Mammary epithelial cell (primary cell): ENCODE measurements at regions of chr5 and their contacts with region 1.

Region 1: DNA sequence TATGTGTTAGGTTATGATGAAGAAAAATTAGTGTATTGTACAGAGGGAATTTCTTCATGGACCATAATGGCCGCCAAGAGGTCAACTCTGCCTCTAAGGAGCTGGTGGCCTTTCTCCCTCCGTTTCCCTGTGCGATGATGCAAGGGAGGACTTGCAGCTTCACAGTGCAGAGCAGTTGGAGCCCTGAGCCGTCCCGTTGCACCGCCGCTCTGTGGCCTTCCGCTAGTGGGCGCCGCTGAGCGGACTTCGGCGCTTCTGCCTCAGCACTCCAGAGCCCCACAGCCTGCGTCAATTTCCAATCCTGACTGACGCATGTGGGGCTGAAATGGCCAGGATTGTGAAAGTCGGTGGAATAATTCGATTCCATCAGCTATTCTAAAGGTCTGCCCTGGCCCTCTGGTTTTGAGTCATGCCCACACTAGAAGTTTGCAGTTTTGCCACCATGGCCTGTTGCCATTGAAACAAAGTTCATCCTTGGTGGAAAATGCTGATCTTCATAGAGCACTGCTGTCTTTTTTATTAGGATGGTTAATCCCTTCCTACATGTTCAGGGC is 22.7 kb upstream of the LECT2 start:
- DNase-seq: peak; percentile 16
- H3K4me3 ChIP-seq: no peak overlapping the region
- H3K27ac ChIP-seq: no peak overlapping the region
- H3K4me1 ChIP-seq: peaks cover 8% of the 10 kb centered on the region
- H3K27me3 ChIP-seq: no peaks in the 10 kb centered on the region
- CTCF ChIP-seq: peak; percentile 85 to 86

Region 2: DNA sequence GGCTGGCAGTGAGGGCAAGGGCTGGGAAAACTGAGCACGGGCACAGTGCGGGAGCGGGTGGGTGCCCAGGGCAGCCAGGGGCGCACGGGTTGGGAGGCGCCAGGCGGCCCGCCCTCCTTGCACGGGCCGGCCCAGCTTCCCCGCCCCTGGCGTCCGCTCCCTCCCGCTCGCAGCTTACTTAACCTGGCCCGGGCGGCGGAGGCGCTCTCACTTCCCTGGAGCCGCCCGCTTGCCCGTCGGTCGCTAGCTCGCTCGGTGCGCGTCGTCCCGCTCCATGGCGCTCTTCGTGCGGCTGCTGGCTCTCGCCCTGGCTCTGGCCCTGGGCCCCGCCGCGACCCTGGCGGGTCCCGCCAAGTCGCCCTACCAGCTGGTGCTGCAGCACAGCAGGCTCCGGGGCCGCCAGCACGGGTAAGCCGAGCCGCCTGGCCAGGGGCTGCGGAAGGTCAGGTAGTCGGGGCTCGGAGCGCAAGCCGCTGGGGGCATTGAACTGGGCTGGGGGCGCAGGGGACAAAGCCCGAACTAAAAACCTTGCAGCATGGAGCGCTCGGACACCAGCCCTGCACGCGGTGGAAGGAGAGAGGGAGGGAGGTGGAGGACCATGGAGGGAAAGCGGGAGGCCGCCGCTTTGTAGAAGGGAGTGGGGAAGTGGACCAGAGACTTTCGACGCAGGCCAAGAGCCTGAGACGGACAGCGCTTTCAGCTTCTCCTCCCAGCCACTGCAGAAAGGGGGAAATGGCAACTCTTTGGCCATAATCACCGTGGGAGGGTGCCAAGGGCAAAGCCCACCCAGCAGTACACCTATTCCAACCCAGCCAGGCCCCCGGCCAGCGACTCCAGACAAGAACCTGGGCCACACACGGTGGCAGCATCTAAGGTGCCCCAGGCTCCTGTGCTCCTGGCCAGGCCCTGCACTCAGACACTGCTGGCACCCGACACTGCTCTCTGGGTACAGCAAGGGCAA is 51.6 kb after region 1 on chr5 and contains the start of gene TGFBI:
- CTCF ChIA-PET with region 1: no interaction called
- dilution Hi-C with region 1: no loop called
- in situ Hi-C with region 1: no loop called
- intact Hi-C with region 1: loop called (anchors 2 kb)
- DNase-seq: peak; percentile 68
- H3K4me3 ChIP-seq: peak within 1 kb of the TSS; percentile 52 to 69 (median 58)
- H3K27ac ChIP-seq: peak within 1 kb of the TSS; percentile 13
- H3K4me1 ChIP-seq: peaks cover 59% of the 10 kb centered on the region
- H3K27me3 ChIP-seq: no peaks in the 10 kb centered on the region
- CTCF ChIP-seq: peak in 1 of 2 donors; percentile 31
- total RNA-seq, gene TGFBI: 56.0 to 77.3 TPM

Region 3: DNA sequence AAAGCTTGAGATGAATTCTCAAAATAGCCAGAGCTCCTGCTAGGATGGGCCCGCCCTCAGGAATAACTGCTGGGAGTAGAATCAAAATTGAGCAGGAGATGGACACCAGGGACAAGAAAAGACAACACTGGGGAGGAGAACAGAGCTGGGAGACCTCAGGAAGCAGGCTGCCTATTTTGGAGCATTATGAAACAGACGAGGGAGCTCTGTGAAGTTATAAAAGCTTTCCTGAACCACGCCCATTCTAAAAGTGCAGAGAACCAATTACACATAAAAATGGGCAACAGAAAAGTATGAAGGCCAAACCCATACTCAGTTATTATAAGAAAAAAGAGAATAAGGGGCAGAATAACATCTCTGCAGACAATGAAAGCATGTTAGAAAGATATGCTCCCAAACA is 601.8 kb after region 1 on chr5:
- CTCF ChIA-PET with region 1: no interaction called
- dilution Hi-C with region 1: no loop called
- in situ Hi-C with region 1: no loop called
- intact Hi-C with region 1: no loop called
- DNase-seq: no peak
- H3K4me3 ChIP-seq: no peak overlapping the region
- H3K27ac ChIP-seq: no peak overlapping the region
- H3K4me1 ChIP-seq: no peaks in the 10 kb centered on the region
- H3K27me3 ChIP-seq: peaks cover 10% of the 10 kb centered on the region
- CTCF ChIP-seq: no peak